ENCODE measurements at regions of chr22 and their contacts with region 1.

Region 1: DNA sequence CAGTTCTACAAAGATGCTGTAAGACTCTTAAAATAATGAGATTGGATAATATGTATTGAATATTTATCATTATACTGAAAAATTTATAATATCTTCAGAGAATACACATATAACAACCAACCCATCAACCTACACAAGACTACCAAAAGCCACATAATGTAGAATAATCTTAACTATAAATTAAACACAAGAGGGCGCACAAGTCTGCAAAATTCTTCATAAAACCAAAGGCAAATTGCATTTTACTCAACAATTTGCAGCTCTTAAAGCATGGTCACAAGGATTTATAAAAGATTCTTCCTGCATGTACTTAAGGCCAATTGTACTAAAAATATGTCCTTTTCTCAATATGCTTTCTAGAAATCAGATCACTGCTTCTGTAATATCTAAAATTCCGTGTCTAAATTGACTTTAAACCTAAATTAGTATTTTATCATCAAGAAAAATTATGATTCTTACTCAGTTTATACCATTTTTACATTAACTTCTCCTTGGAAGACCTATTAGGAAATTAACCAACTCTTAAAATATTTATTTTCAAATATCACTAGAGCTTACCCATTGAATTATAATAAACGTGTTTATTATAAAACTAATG is 79.0 kb downstream of the TTC28 start:
- DNase-seq: peak; percentile 28
- H3K4me3 ChIP-seq: no peak overlapping the region
- CTCF ChIP-seq: no peak

Region 2: DNA sequence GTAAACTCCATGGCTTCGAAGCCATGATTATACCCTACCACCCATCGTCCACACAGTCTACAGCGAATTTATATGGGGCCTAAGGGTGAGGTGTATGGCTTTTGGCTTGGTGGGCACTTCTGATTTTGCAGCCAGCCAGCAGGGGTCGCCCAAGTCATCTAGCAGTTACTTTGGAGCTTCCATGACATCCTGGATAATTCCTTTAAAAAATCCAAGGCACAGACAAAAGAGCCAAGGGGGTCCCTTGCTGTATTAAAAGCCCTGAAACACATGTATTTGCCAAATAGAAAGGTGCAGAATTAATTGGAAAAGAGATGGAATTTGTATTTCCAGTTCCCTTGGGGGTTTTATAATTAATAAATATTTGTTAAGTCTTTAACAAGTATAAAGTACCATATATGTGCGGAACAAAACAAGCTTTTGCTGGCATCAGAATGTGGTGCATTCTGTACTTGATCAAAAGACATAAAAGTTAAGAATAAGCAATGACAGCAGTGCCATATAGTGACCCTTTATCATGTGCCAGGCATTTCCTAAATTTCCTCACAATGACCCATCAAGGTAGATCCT is 548.8 kb before region 1 on chr22:
- CTCF ChIA-PET with region 1: interaction called, 89 read pairs
- POLR2A ChIA-PET with region 1: no interaction called
- DNase-seq: no peak
- H3K4me3 ChIP-seq: no peak overlapping the region
- CTCF ChIP-seq: peak; percentile 87

Region 3: GRCh38 chr22:28480000-28480715 is 120.5 kb before region 1 on chr22:
- CTCF ChIA-PET with region 1: no interaction called
- POLR2A ChIA-PET with region 1: no interaction called
- DNase-seq: no peak
- H3K4me3 ChIP-seq: no peak overlapping the region
- CTCF ChIP-seq: no peak

Region 4: DNA sequence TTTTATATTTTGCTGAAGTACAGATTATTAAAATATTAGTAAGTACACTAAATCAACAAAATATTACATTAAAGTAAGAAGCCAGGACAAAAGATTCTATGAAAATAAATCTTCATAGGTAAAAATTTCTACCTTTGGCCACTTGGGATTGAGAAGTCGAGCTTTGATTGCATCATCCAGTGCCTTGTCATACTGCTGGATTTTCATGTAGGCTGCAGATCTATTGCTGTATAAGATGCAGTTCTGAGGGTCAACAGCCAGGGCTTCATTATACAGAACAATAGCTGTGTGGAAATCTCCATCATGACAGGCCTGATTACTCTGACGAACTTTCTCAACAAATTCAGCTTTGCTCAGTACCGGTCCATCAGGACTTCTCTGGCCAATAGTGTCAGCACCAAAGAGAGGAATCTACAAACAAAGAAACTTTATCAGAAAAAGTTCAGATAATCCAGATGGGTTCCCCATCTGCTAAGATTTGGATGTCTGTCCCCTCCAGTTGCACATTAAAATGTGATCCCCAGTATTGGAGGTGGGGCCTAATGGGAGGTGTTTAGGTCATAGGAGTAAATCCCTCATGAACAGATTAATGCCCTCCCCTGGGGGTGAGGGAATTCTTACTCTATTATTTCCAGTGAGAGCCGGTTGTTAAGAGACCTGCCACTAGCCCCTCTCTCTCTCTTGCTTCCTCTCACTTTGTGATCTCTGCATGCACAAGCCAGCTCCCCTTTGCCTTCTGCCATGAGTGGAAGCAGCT is 29.0 kb after region 1 on chr22:
- CTCF ChIA-PET with region 1: no interaction called
- POLR2A ChIA-PET with region 1: no interaction called
- DNase-seq: no peak
- H3K4me3 ChIP-seq: no peak overlapping the region
- CTCF ChIP-seq: no peak

Region 5: DNA sequence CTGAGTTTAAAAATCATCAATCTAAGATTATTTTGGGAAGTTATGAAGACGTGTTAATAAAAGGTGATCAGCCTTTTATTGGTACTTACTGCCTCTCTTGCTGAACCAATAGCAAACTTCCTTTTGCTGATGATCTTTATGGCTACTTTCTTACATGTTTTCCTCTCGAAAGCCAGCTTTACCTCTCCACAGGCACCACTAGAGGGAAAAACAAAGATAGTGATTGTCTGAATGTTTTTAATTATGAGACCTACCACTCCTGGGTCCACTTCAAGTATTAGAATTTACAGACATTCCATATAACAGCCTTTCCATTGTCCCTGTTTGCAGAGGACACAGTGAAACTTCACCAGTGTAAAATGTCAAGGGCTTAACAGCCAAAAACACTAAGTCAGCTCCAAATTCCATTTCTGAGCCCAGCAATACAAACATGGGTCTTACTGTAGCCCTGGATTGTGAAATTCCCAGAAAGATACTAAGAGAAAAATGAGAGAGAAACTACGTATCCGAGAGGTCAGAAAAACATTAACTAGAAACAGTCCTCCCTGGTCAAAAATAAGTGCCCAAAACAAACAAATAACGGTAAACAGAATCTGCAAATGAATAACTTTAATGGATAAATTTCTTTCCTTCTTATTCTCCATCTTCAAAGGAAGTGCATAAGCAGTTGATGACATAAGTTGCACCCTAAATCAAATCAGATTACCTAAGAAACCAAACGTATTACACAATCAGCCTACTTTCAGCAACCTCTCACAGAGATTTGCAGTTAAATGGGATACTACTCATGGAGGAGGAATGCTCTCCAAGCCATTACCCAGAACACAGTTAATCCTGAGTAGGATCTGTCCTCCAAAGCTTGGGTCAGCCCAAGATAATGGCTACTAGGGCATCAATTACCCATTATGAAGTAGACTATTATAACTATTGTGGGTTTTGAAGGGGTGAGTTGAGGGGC is 111.5 kb after region 1 on chr22:
- CTCF ChIA-PET with region 1: no interaction called
- POLR2A ChIA-PET with region 1: no interaction called
- DNase-seq: peak; percentile 94
- H3K4me3 ChIP-seq: peak overlapping the region; percentile 19
- CTCF ChIP-seq: no peak

Region 6: GRCh38 chr22:28772633-28773460 is 172.2 kb after region 1 on chr22 and contains the start of gene CCDC117:
- CTCF ChIA-PET with region 1: interaction called, 14 read pairs
- POLR2A ChIA-PET with region 1: no interaction called
- DNase-seq: peak; percentile 74
- H3K4me3 ChIP-seq: peak within 1 kb of the TSS; percentile 82
- CTCF ChIP-seq: no peak

Region 7: DNA sequence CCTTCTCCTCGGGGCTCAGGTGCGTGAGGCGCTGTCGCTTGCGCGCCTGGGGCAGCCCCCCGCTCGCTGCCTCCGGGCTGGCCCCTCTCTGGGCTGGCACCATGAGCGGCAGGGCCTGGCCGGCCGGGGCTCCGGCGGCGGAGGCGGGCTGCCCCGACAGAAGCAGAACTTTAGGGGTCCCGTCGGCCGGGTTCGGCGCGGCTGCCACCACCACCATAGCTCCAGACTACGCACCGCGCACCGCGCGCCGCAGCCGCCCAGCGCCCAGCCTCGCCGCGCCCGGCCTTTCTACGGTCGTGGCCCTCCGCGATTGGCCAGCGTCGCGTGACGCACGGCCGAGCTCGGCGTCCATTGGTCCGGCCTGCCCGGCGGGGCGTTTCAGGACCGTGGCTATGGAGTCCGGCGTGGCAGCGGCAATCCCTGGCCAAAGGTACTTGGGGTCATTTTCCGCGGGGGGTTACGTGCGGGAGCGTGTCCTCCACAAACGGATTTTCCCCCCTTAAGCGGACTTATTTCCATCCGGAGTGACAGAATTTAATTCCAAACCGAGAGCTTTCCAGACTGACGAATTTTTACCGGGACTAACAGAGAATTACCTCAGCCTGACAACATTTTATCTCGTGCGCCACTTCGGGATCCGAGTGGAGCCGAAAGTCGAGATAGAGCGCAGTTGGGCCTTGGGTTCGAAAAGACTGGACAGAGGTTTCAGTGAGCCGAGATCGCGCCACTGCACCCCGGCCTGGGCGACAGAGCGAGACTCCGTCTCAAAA is 199.8 kb after region 1 on chr22 and contains the start of gene XBP1:
- CTCF ChIA-PET with region 1: interaction called, 21 read pairs
- POLR2A ChIA-PET with region 1: interaction called, 3 read pairs
- DNase-seq: peak; percentile 63
- H3K4me3 ChIP-seq: peak within 1 kb of the TSS; percentile 59
- CTCF ChIP-seq: no peak

Region 8: DNA sequence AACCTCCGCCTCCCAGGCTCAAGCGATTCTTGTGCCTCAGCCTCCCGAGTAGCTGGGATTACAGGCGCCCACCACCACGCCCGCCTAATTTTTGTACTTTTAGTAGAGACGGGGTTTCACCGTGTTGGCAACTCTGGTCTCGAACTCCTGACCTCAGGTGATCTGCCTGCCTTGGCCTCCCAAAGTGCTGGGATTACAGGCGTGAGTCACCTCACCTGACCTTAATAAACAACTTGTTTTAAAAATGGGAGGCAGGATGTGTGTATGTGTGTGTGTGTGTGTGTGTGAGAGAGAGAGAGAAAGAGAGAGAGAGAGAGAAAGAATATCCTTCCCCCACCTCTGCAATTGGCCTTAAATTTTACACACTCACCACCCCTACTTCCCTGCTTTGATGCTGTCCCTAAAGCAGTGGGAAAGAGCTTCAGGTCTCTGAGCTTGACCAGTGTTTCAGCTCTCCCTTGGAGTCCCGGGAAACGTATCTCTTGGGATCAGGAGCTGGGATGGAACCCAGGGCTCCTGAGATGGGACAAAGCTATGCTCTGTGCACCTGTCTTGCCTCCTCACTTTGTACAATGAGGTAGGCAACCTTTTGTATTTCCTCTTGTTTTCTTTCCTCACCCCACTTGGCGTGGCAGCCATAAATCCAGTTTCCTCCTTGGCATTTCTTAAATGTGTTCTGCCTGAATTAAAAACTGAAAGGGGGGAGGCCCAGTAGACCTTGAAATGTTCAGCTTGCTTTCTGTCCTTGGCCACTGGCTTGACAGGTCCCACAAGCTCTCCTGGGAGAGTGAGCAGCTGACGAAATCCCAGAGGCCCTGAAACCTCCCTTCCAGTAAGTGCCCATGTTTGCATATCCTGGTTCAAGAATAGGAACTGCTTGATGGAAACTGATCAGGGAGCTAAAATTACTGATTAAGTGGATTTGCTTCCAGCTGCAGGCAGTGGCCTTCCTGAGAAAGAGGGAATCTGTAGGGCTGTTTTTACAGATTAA is 217.6 kb after region 1 on chr22:
- CTCF ChIA-PET with region 1: interaction called, 20 read pairs
- POLR2A ChIA-PET with region 1: no interaction called
- DNase-seq: no peak
- H3K4me3 ChIP-seq: no peak overlapping the region
- CTCF ChIP-seq: no peak

Region 9: GRCh38 chr22:29040385-29041275 is 440.0 kb after region 1 on chr22:
- CTCF ChIA-PET with region 1: interaction called, 37 read pairs
- POLR2A ChIA-PET with region 1: no interaction called
- DNase-seq: peak; percentile 74
- H3K4me3 ChIP-seq: no peak overlapping the region
- CTCF ChIP-seq: peak; percentile 82

Region 10: GRCh38 chr22:29245637-29246385 is 645.2 kb after region 1 on chr22:
- CTCF ChIA-PET with region 1: interaction called, 23 read pairs
- POLR2A ChIA-PET with region 1: no interaction called
- DNase-seq: no peak
- H3K4me3 ChIP-seq: no peak overlapping the region
- CTCF ChIP-seq: peak; percentile 97

Measured in AG04449 (cell line).